ENCODE measurements at regions of chr6 and their contacts with region 1.

Region 1: GRCh38 chr6:46419576-46420002 is 71.7 kb downstream of the RCAN2 start:
- DNase-seq: peak in 3 of 6 donors; percentile 40 to 66 (median 50)
- ATAC-seq: peak; percentile 61 to 86 (median 86)
- H3K4me3 ChIP-seq: no peak overlapping the region
- H3K27ac ChIP-seq: no peak overlapping the region
- H3K4me1 ChIP-seq: no peaks in the 10 kb centered on the region
- H3K27me3 ChIP-seq: no peaks in the 10 kb centered on the region
- CTCF ChIP-seq: peak; percentile 34 to 71 (median 64)

Region 2: DNA sequence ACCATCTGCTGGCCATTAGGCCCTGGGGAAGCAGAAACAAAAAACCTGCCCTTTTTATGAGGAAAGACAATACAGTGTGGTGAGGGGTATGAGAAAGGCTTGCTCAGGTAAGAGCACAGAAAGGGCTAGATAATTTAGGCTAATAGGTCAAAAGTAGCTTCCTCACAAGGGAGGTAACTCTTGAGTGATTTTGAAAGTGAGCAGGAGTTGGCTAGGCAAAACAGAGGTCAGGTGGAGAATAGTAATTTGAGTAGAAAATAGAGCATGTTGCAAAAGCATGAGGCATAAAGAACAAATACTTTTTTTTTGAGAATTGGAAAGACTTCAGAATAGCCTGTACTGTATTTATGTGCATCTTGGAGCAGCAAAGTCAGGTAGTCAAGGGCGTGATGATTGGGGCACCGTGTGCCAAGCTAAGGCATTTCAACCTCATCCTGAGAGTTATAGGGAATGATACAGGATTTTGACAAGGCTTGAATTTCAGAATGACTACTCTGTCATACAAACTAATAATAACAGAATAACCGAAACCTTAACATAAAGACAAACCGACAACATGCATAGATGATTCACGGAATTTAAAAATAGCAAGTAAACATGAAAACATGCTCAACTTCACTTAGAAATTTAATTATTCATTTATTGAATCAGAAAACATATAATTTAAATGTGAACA is 125.8 kb before region 1 on chr6:
- intact Hi-C with region 1: no loop called
- DNase-seq: no peak
- ATAC-seq: no peak
- H3K4me3 ChIP-seq: no peak overlapping the region
- H3K27ac ChIP-seq: no peak overlapping the region
- H3K4me1 ChIP-seq: peaks cover 0 to 9% (median 0%) of the 10 kb centered on the region in 3 donors
- H3K27me3 ChIP-seq: no peaks in the 10 kb centered on the region
- CTCF ChIP-seq: no peak

Region 3: DNA sequence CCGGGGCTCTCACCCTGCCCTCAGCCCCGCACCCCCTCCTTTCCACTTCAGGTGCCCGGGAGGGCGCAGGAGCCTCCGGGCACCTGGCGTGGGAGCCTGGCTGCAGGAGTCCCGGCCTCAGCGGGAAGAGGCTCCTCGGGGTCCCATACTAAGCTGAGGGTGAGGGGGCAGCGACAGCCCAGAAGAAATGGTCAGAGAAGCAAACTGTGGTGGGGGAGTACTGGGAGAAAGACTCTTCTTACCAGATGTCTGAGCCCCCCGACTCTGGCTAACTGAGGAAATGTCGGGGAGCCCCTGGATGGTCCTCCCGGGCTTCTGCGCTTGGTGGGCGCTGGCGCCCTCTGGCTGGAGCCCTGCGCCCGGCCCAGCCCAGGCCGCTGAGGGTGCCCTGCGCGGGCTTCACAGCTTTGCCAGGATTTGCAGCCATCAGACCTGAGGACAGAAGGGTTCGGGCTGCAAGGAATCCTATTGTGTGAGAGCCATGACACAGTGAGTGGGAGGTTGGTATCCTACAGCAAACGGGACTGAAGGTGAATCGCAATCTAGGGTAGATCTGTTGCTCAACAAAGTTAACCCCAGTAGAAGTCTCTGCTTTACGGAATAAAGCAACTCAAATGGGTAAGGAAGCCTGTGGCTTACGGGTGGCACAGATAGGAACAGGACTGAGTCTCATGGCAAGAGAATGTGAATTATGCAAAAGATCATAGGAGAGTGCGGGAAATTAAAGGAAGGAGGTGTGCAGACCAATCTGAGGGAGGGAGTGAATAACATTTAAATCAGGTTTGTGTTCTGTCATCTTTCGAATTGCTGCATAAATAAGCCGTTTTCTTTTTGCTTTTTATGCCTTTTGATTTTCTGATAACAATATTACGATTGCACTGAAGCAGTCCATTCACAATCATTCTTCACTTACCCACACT is 72.3 kb after region 1 on chr6:
- intact Hi-C with region 1: loop called in 1 of 3 experiments (anchors 10 kb)
- DNase-seq: peak; percentile 45 to 84 (median 57)
- ATAC-seq: peak; percentile 81 to 94 (median 89)
- H3K4me3 ChIP-seq: peak overlapping the region; percentile 63 to 84 (median 72)
- H3K27ac ChIP-seq: peak overlapping the region; percentile 32 to 80 (median 74)
- H3K4me1 ChIP-seq: peaks cover 0 to 7% (median 0%) of the 10 kb centered on the region in 3 donors
- H3K27me3 ChIP-seq: no peaks in the 10 kb centered on the region
- CTCF ChIP-seq: peak in 3 of 4 donors; percentile 36 to 45 (median 45)

Region 4: GRCh38 chr6:46549155-46549554 is 129.6 kb after region 1 on chr6:
- intact Hi-C with region 1: no loop called
- DNase-seq: no peak
- ATAC-seq: peak in 3 of 4 donors; percentile 47 to 77 (median 63)
- H3K4me3 ChIP-seq: no peak overlapping the region
- H3K27ac ChIP-seq: no peak overlapping the region
- H3K4me1 ChIP-seq: no peaks in the 10 kb centered on the region
- H3K27me3 ChIP-seq: no peaks in the 10 kb centered on the region
- CTCF ChIP-seq: no peak

Region 5: GRCh38 chr6:46626228-46626909 is 206.8 kb after region 1 on chr6:
- intact Hi-C with region 1: loop called in 2 of 3 experiments (anchors 5 to 10 kb)
- DNase-seq: no peak
- ATAC-seq: peak in 3 of 4 donors; percentile 74 to 79 (median 77)
- H3K4me3 ChIP-seq: no peak overlapping the region
- H3K27ac ChIP-seq: no peak overlapping the region
- H3K4me1 ChIP-seq: no peaks in the 10 kb centered on the region
- H3K27me3 ChIP-seq: no peaks in the 10 kb centered on the region
- CTCF ChIP-seq: peak; percentile 5 to 46 (median 30)